CD4-positive, alpha-beta memory T cell (primary cell): ENCODE measurements at regions of chr14 and their contacts with region 1.

Region 1: GRCh38 chr14:64891839-64892375 is 12.2 kb upstream of the SPTB start:
- DNase-seq: peak; percentile 56 to 65 (median 62)
- H3K4me3 ChIP-seq: no peak overlapping the region
- H3K4me3 Mint-ChIP-seq: no peak overlapping the region
- H3K27ac ChIP-seq: no peak overlapping the region
- H3K27ac Mint-ChIP-seq: no peak overlapping the region
- H3K4me1 ChIP-seq: no peaks in the 10 kb centered on the region
- H3K4me1 Mint-ChIP-seq: peaks cover 0 to 3% (median under 1%) of the 10 kb centered on the region in 4 donors
- H3K27me3 ChIP-seq: peaks cover 3% of the 10 kb centered on the region
- H3K27me3 Mint-ChIP-seq: peaks cover 7 to 8% of the 10 kb centered on the region in 2 donors

Region 2: DNA sequence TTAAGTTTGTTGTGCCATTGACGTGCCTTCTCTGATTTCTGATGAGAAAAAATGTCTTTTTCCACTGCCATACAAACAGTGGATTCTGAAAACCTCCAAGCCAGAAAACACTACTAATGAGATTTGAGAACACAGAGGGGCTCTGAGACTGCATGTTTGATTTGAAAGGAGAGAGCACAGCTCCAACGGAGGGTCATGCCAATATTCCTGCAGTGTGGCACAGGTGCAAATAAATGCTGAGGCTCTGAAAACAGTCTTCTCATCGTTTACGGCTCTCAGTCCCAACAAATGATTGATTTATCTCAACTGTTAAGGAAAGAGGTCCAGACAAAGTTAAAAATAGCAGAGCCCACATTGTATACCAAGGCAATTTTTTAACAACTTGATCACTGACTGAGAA is 1975.4 kb before region 1 on chr14:
- CTCF ChIA-PET with region 1: no interaction called
- POLR2A ChIA-PET with region 1: no interaction called
- intact Hi-C with region 1: no loop called
- DNase-seq: no peak
- H3K4me3 ChIP-seq: no peak overlapping the region
- H3K4me3 Mint-ChIP-seq: no peak overlapping the region
- H3K27ac ChIP-seq: no peak overlapping the region
- H3K27ac Mint-ChIP-seq: no peak overlapping the region
- H3K4me1 ChIP-seq: no peaks in the 10 kb centered on the region
- H3K4me1 Mint-ChIP-seq: no peaks in the 10 kb centered on the region
- H3K27me3 ChIP-seq: no peaks in the 10 kb centered on the region
- H3K27me3 Mint-ChIP-seq: peaks cover 0 to 1% of the 10 kb centered on the region in 2 donors

Region 3: DNA sequence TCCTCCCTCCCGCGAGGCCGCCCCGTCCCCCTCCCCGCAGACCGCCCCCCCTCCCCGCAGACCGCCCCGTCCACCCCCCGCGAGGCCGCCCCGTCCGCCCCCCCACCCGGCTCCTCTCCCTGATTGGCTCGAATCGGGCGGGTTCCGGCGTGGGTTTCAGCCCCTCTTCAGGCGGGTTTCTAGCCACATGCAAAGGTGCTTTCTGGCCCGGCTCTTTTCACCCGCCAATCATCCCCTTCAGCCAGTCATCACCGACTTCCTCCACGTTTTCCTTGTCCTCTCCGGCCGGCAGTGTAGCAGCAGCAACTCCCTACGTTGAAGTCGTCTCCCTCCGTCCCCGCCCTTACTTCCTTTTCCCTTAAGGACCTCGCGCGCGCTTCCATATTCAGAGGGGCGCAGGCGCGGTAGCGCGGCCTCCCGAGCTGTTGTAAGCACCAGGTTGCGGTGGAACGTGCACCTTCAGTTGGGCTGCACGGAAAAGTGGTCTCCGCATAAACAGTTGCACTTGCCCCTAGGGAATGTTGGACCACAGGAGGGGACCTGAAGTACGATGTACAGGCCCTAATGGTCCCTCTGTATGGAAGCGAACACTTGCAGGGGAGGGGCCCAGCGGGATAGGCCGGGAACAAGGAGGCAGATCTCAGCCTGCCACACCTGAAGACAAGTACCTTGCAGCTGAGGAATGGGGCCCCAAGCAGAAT is 553.1 kb before region 1 on chr14:
- CTCF ChIA-PET with region 1: interaction called, 22 read pairs
- POLR2A ChIA-PET with region 1: no interaction called
- intact Hi-C with region 1: loop called (anchors 5 kb)
- DNase-seq: peak; percentile 84 to 91 (median 85)
- H3K4me3 ChIP-seq: peak overlapping the region; percentile 36 to 77
- H3K4me3 Mint-ChIP-seq: peak overlapping the region; percentile 93 to 99 (median 95)
- H3K27ac ChIP-seq: peak overlapping the region; percentile 34
- H3K27ac Mint-ChIP-seq: peak overlapping the region; percentile 83 to 97 (median 95)
- H3K4me1 ChIP-seq: peaks cover 17% of the 10 kb centered on the region
- H3K4me1 Mint-ChIP-seq: peaks cover 12 to 27% (median 21%) of the 10 kb centered on the region in 4 donors
- H3K27me3 ChIP-seq: no peaks in the 10 kb centered on the region
- H3K27me3 Mint-ChIP-seq: no peaks in the 10 kb centered on the region

Region 4: DNA sequence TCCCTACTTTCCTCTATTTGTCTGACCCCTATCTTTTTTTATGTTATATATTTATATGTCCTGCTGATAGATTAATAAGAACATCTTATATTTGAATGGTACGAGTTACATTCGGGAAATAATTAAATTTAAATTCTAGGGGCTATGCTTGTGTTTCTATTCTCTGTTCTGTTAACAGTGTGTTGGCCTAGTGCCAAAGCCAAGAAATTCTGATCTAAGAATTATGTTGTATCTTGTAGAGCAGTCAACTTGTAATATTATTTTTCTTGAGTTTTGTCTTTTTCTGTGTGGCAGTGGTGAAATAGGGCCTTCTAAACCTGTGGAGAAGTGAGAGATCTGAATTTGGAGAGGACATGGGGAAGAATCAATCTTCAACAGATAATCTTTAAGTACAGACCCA is 360.3 kb before region 1 on chr14:
- CTCF ChIA-PET with region 1: no interaction called
- POLR2A ChIA-PET with region 1: no interaction called
- intact Hi-C with region 1: no loop called
- DNase-seq: no peak
- H3K4me3 ChIP-seq: no peak overlapping the region
- H3K4me3 Mint-ChIP-seq: no peak overlapping the region
- H3K27ac ChIP-seq: no peak overlapping the region
- H3K27ac Mint-ChIP-seq: peak overlapping the region in 1 of 7 donors; percentile 32
- H3K4me1 ChIP-seq: no peaks in the 10 kb centered on the region
- H3K4me1 Mint-ChIP-seq: peaks cover 0 to 5% (median 1%) of the 10 kb centered on the region in 4 donors
- H3K27me3 ChIP-seq: no peaks in the 10 kb centered on the region
- H3K27me3 Mint-ChIP-seq: no peaks in the 10 kb centered on the region

Region 5: GRCh38 chr14:64636208-64636979 is 255.5 kb before region 1 on chr14:
- CTCF ChIA-PET with region 1: interaction called, 37 read pairs
- POLR2A ChIA-PET with region 1: interaction called, 3 read pairs
- intact Hi-C with region 1: no loop called
- DNase-seq: peak; percentile 55 to 73 (median 63)
- H3K4me3 ChIP-seq: no peak overlapping the region
- H3K4me3 Mint-ChIP-seq: no peak overlapping the region
- H3K27ac ChIP-seq: no peak overlapping the region
- H3K27ac Mint-ChIP-seq: peak overlapping the region in 2 of 7 donors; percentile 8 to 17
- H3K4me1 ChIP-seq: no peaks in the 10 kb centered on the region
- H3K4me1 Mint-ChIP-seq: peaks cover 0 to 5% (median 4%) of the 10 kb centered on the region in 4 donors
- H3K27me3 ChIP-seq: no peaks in the 10 kb centered on the region
- H3K27me3 Mint-ChIP-seq: peaks cover 1 to 5% of the 10 kb centered on the region in 2 donors

Region 6: DNA sequence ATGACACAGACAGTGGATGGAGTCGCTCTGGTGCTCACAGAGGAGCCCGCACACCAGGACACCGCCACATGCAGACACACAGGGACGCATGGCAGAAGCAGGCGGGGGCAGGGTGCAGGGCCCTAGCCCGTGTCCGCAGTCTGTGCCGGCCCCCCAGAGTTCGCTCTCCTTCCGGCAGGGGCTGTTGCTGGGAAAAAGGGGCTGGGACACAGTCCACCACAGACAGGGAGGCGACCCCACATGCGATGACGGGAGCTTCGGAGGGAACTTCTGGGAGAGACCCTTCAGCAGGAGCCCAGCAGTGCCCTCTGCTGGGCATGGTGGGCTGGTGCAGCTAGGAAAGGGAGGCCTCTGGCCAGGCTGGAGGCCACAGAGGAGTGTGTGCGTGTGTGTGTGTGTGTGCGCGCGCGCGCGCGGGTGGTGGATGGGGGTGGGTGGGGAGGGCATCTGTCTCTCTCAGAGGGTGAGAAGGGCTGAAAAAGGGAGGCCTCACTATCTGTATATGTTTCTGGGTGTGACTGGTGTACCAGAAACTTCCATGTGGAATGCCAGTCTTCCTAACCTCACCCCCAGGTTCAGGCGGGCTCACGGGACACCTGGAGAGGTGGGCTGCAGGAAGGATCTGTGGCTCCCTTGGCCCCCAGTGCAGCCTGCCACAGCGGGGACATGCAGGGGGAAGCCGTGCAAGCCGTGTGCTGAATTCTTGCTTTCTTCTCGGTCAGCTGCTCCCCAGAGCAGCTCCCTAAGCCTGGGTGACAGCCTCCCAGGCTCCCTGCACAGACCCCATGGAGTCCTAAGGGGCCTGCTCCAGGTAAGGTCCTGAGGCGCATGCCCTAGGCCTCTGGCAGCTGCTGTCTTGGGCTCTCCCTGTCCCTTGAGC is 127.0 kb before region 1 on chr14:
- CTCF ChIA-PET with region 1: interaction called, 22 read pairs
- POLR2A ChIA-PET with region 1: interaction called, 4 read pairs
- intact Hi-C with region 1: loop called (anchors 5 kb)
- DNase-seq: peak; percentile 66 to 78 (median 70)
- H3K4me3 ChIP-seq: no peak overlapping the region
- H3K4me3 Mint-ChIP-seq: peak overlapping the region; percentile 65 to 81 (median 72)
- H3K27ac ChIP-seq: no peak overlapping the region
- H3K27ac Mint-ChIP-seq: peak overlapping the region; percentile 74 to 90 (median 85)
- H3K4me1 ChIP-seq: peaks cover 60% of the 10 kb centered on the region
- H3K4me1 Mint-ChIP-seq: peaks cover 48 to 66% (median 58%) of the 10 kb centered on the region in 4 donors
- H3K27me3 ChIP-seq: no peaks in the 10 kb centered on the region
- H3K27me3 Mint-ChIP-seq: no peaks in the 10 kb centered on the region

Region 7: GRCh38 chr14:64870160-64870559 is 21.7 kb before region 1 on chr14:
- CTCF ChIA-PET with region 1: interaction called, 87 read pairs
- POLR2A ChIA-PET with region 1: no interaction called
- intact Hi-C with region 1: no loop called
- DNase-seq: no peak
- H3K4me3 ChIP-seq: no peak overlapping the region
- H3K4me3 Mint-ChIP-seq: no peak overlapping the region
- H3K27ac ChIP-seq: no peak overlapping the region
- H3K27ac Mint-ChIP-seq: no peak overlapping the region
- H3K4me1 ChIP-seq: no peaks in the 10 kb centered on the region
- H3K4me1 Mint-ChIP-seq: no peaks in the 10 kb centered on the region
- H3K27me3 ChIP-seq: no peaks in the 10 kb centered on the region
- H3K27me3 Mint-ChIP-seq: peaks cover 16 to 31% of the 10 kb centered on the region in 2 donors

Region 8: DNA sequence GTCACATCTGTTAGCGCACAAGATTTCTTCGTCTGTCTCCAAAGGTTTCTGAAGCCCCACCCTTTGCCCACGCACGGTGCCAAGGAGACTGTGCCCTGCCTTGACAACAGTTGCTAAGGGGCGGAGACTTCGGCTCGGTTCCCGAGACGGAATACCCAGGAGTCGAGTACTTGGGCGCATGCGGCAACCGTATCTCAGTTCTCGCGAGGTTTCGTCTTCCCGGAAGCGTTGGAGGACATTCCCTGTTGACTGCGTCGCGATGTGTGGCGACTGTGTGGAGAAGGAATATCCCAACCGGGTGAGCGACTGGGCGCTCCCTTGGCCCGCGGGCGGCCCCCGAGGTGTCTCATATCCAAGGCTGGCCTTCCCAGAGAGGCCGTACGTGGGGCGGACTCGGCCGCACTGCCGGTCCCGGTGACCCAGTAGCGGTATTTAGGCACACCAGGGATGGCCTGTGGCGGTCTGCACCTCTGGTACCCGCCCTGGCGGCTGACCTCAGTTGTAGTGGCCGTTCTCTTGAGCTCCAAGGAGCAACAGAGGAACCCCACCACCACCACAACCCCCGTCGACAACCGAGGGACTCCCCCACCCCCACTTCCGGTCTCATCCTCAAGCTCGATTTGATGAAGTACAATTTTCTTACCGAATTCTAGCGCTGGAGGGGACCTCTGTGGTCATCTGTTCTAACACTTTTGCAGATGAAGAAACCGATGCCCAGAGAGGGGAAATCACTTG is 22.5 kb after region 1 on chr14 and contains the start of gene CHURC1:
- CTCF ChIA-PET with region 1: interaction called, 13 read pairs
- POLR2A ChIA-PET with region 1: interaction called, 8 read pairs
- intact Hi-C with region 1: no loop called
- DNase-seq: peak; percentile 94 to 99 (median 97)
- H3K4me3 ChIP-seq: peak within 1 kb of the TSS; percentile 90 to 99
- H3K4me3 Mint-ChIP-seq: peak within 1 kb of the TSS; percentile 84 to 95 (median 90)
- H3K27ac ChIP-seq: peak within 1 kb of the TSS; percentile 100
- H3K27ac Mint-ChIP-seq: peak within 1 kb of the TSS; percentile 92 to 99 (median 98)
- H3K4me1 ChIP-seq: peaks cover 46% of the 10 kb centered on the region
- H3K4me1 Mint-ChIP-seq: peaks cover 33 to 56% (median 45%) of the 10 kb centered on the region in 4 donors
- H3K27me3 ChIP-seq: no peaks in the 10 kb centered on the region
- H3K27me3 Mint-ChIP-seq: peaks cover 0 to 1% of the 10 kb centered on the region in 2 donors
- total RNA-seq, gene CHURC1: 112 to 116 TPM

Region 9: DNA sequence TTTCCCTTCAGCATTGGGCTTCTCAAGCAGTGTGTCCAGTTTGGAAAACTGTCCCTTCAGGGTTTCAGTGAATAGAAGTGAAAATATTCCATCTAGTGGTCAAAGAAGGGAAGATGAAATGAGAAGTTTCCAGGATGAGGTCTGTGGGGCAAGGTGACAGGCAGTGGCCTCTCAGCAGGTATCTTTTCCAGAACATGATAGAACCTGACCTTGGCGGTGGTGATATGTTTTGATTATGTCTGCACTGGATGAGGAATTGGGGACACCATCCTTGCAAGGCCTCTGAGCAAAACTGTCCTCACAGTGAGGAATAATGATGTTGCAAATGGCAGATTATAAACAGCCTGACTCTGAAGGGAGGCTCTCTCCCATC is 45.9 kb after region 1 on chr14:
- CTCF ChIA-PET with region 1: interaction called, 19 read pairs
- POLR2A ChIA-PET with region 1: no interaction called
- intact Hi-C with region 1: no loop called
- DNase-seq: no peak
- H3K4me3 ChIP-seq: no peak overlapping the region
- H3K4me3 Mint-ChIP-seq: no peak overlapping the region
- H3K27ac ChIP-seq: no peak overlapping the region
- H3K27ac Mint-ChIP-seq: peak overlapping the region in 6 of 7 donors; percentile 13 to 70 (median 62)
- H3K4me1 ChIP-seq: peaks cover 17% of the 10 kb centered on the region
- H3K4me1 Mint-ChIP-seq: peaks cover 37 to 83% (median 56%) of the 10 kb centered on the region in 4 donors
- H3K27me3 ChIP-seq: no peaks in the 10 kb centered on the region
- H3K27me3 Mint-ChIP-seq: no peaks in the 10 kb centered on the region

Region 10: GRCh38 chr14:65211341-65211987 is 319.6 kb after region 1 on chr14:
- CTCF ChIA-PET with region 1: no interaction called
- POLR2A ChIA-PET with region 1: no interaction called
- intact Hi-C with region 1: no loop called
- DNase-seq: no peak
- H3K4me3 ChIP-seq: no peak overlapping the region
- H3K4me3 Mint-ChIP-seq: peak overlapping the region in 4 of 8 donors; percentile 4 to 67 (median 54)
- H3K27ac ChIP-seq: no peak overlapping the region
- H3K27ac Mint-ChIP-seq: peak overlapping the region in 5 of 7 donors; percentile 4 to 82 (median 69)
- H3K4me1 ChIP-seq: peaks cover 56% of the 10 kb centered on the region
- H3K4me1 Mint-ChIP-seq: peaks cover 33 to 59% (median 44%) of the 10 kb centered on the region in 4 donors
- H3K27me3 ChIP-seq: no peaks in the 10 kb centered on the region
- H3K27me3 Mint-ChIP-seq: no peaks in the 10 kb centered on the region